Posterior vena cava (tissue), 2 donors: ENCODE measurements at regions of chr17 and their contacts with region 1.

Region 1: GRCh38 chr17:29777663-29778062 is 152.4 kb downstream of the SSH2 start:
- DNase-seq: no peak

Region 2: DNA sequence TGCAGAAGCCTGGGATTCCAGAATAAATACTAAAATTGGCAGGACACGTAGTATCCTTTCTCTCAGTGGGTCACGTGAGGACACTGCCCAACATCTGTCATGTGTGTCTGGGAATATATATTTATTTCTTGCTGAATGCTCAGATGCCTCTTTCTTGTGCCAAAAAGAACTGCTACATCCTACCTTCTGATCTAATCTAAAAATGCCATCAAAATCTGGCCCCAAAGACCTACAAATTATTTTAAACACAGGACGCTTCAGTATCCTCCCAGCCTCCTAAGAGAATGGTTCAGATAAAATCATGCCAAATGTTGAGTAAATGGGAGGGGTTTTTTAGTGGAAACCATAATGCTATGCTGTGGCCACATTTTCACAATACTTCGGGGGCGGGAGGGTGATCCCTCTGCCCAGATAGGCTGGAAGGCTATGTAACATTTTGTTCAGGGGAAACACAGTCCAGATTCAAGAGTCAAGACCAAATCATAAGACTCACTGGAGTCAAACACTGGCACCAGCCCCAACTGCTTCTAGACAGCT is 132.1 kb before region 1 on chr17:
- intact Hi-C with region 1: loop called in 1 of 2 experiments (anchors 5 kb)
- DNase-seq: peak; percentile 91